Calu3 (cell line): ENCODE measurements at regions of chr2 and their contacts with region 1.

Region 1: DNA sequence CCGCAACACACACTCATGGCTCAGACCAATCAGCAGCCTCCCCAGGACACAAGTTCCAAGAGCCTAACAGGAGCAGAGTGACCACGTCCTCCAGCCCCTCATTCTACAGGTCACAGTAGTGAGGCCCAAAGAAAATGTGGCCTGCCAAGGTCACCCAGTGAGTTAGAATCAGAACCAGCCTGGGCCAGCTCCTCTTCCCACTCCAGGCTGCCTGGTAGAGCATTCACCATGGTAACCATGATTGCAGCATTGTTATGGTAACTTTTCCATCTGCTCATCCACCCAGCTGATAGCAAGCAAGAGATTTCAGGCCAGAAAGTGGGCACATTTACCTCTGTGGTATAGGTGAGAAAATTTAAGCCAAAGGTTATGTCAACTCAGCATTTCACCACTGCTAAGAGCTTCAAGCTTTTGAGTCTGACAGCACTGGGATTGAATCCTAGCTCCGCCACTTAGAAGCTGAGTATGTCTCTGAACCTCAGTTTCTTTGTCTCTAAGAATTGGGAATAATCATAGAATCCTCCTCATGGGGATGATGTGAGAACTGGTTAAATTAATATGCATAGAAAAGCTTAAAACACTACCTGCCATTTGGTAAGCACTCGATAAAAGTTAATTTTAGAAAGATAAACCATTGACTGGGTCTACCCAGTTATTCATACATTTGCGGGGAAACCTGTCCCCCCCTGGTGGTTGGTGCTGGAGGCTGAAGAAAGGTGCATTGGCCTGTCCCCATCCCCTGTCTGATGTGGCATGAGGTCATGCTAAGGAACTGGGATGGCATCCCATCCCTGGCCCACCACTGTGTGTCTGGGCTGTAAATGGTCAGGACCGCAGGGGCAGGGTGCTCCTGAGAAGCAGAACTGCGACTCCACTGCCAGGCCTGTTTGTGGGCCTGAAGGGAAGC is 181.5 kb downstream of the KLHL29 start:
- DNase-seq: peak; percentile 54
- H3K4me3 Mint-ChIP-seq: no peak overlapping the region
- H3K27ac Mint-ChIP-seq: no peak overlapping the region
- H3K4me1 Mint-ChIP-seq: peaks cover 8% of the 10 kb centered on the region
- H3K27me3 Mint-ChIP-seq: no peaks in the 10 kb centered on the region
- CTCF ChIP-seq: peak; percentile 44

Region 2: GRCh38 chr2:23351388-23352141 is 214.9 kb before region 1 on chr2:
- CTCF ChIA-PET with region 1: no interaction called
- intact Hi-C with region 1: no loop called
- DNase-seq: peak; percentile 84
- H3K4me3 Mint-ChIP-seq: no peak overlapping the region
- H3K27ac Mint-ChIP-seq: no peak overlapping the region
- H3K4me1 Mint-ChIP-seq: no peaks in the 10 kb centered on the region
- H3K27me3 Mint-ChIP-seq: peaks cover 49% of the 10 kb centered on the region
- CTCF ChIP-seq: peak; percentile 73

Region 3: GRCh38 chr2:23366720-23367119 is 199.8 kb before region 1 on chr2:
- CTCF ChIA-PET with region 1: no interaction called
- intact Hi-C with region 1: loop called (anchors 2 kb)
- DNase-seq: no peak
- H3K4me3 Mint-ChIP-seq: peak overlapping the region; percentile 47
- H3K27ac Mint-ChIP-seq: peak overlapping the region; percentile 32
- H3K4me1 Mint-ChIP-seq: peaks cover 15% of the 10 kb centered on the region
- H3K27me3 Mint-ChIP-seq: peaks cover 18% of the 10 kb centered on the region
- CTCF ChIP-seq: no peak

Region 4: GRCh38 chr2:23404426-23404825 is 162.1 kb before region 1 on chr2:
- CTCF ChIA-PET with region 1: no interaction called
- intact Hi-C with region 1: loop called (anchors 1 kb)
- DNase-seq: peak; percentile 36
- H3K4me3 Mint-ChIP-seq: peak overlapping the region; percentile 49
- H3K27ac Mint-ChIP-seq: peak overlapping the region; percentile 5
- H3K4me1 Mint-ChIP-seq: peaks cover 31% of the 10 kb centered on the region
- H3K27me3 Mint-ChIP-seq: no peaks in the 10 kb centered on the region
- CTCF ChIP-seq: no peak